IMR-90 (cell line): ENCODE measurements at regions of chr10 and their contacts with region 1.

Region 1: DNA sequence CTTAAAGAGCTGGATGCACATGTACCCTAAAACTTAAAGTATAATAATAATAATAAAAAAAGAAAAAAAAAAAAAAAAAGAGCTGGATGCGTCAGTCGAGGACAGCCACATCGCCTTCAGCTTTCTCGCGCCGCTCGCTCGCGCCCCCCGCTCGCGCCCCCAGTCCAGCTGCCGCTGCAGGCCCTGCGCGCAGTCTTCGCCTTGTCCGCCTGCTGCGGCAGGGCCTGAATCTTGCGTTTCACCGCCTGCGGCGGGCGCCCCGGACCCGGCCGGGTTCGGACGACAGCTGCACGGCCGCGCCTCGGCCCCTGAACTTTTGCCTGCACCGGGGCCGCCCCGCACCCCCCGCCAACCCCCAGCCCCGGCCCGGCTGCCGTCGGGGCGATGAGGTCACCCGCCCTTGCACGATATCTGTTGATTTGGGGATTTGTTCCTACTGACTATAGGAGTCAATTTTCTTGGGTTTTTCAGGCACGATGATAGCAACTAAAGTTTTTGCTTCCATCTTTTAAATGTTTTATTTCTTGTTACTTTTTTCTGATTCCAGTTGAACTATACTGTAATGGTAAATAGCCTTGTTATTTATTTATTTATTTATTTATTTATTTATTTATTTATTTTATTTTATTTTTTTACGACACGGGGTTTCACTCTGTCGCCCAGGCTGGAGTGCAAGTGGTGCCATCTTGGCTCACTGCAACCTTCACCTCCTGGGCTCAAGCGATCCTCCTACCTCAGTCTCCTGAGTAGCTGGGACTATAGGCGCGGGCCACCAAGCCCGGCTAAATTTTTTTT is 33.5 kb upstream of the CPN1 start:
- DNase-seq: no peak
- ATAC-seq: peak; percentile 42
- H3K4me3 ChIP-seq: no peak overlapping the region
- H3K27ac ChIP-seq: no peak overlapping the region
- H3K4me1 ChIP-seq: no peaks in the 10 kb centered on the region
- H3K27me3 ChIP-seq: peaks cover 28% of the 10 kb centered on the region
- CTCF ChIP-seq: no peak
- POLR2A ChIP-seq: no peak
- RAD21 ChIP-seq: no peak

Region 2: DNA sequence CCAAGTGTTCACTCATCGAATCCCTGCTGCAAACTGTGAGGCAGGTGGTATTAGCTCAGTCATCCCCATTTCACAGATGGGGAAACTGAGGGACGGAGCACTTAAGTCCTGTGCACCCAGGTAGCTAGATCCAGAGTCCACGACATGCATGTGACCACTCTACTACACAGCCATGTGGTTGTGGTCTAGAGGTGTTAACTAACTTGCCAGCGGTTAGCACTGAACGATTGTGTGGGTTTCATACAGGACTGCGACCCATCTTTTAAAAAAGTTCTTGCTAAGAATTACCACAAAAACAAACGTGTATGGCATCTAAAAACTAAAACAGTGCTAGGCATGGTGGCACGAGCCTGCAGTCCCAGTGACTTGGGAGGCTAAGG is 348.9 kb before region 1 on chr10:
- CTCF ChIA-PET with region 1: no interaction called
- POLR2A ChIA-PET with region 1: no interaction called
- dilution Hi-C with region 1: no loop called
- in situ Hi-C with region 1: no loop called
- intact Hi-C with region 1: no loop called
- DNase-seq: no peak
- ATAC-seq: no peak
- H3K4me3 ChIP-seq: no peak overlapping the region
- H3K27ac ChIP-seq: no peak overlapping the region
- H3K4me1 ChIP-seq: peaks cover 4% of the 10 kb centered on the region; the same call in 1 of the 2 replicates
- H3K27me3 ChIP-seq: no peaks in the 10 kb centered on the region
- CTCF ChIP-seq: no peak
- POLR2A ChIP-seq: no peak
- RAD21 ChIP-seq: no peak

Region 3: GRCh38 chr10:100130831-100131230 is 15.7 kb after region 1 on chr10:
- CTCF ChIA-PET with region 1: interaction called, 11 read pairs
- POLR2A ChIA-PET with region 1: no interaction called
- dilution Hi-C with region 1: no loop called
- in situ Hi-C with region 1: no loop called
- intact Hi-C with region 1: no loop called
- DNase-seq: no peak
- ATAC-seq: no peak
- H3K4me3 ChIP-seq: no peak overlapping the region
- H3K27ac ChIP-seq: no peak overlapping the region
- H3K4me1 ChIP-seq: no peaks in the 10 kb centered on the region
- H3K27me3 ChIP-seq: peaks cover 12% of the 10 kb centered on the region
- CTCF ChIP-seq: no peak
- POLR2A ChIP-seq: no peak
- RAD21 ChIP-seq: no peak